ENCODE measurements at regions of chr2 and their contacts with region 1.

Region 1: DNA sequence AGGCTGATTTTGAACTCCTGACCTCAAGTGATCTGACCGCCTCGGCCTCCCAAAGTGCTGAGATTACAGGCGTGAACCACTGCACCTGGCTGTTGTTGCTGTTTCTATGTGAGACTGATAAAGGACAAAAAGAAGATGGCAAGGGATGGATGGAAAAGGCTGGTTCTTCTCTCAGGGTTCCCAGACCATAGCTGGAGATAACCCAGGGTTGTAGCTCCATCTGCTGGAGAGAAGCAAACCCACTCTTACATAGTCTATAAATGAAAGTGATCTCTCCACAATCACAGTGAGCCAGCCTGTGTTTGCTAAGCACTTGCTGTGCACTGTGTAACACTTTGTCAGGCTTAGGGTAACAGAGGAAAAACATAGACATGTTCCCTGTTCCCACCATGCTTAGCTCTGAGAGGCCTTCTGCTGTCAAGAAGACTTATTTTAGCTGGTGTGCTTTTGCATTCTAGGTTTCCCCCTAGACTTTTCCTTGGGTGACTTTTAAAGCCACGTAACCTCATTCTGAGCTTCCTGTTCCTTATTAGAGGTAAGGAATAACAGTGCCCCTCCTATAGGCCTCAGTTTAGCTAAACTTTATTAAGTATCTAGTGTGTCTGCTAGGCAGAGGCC is 49.7 kb downstream of the LIMS1 start:
- DNase-seq: peak; percentile 83
- H3K4me3 ChIP-seq: no peak overlapping the region
- H3K27ac ChIP-seq: peak overlapping the region; percentile 3
- H3K4me1 ChIP-seq: peaks cover 63% of the 10 kb centered on the region
- H3K27me3 ChIP-seq: no peaks in the 10 kb centered on the region
- CTCF ChIP-seq: peak; percentile 69 to 76
- POLR2A ChIP-seq: no peak

Region 2: DNA sequence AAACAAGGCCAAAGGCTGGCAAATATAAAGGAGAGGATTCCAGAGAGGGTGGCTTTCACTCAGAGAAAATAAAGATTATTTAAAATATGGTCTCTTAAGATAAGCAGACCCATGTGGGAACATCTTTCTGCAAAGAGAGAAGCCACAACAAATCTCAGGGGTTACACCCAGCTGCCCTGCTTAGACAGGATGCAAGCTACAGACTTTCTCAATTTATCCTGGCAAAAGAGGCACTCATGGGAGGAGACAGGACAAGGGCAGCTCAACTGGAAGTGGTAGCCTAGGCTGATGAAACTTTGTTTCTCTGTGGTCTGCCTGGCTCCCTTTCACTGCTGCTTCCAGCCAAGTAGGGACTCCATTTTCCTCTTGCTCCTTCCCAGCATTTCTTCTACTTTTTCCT is 232.1 kb before region 1 on chr2:
- CTCF ChIA-PET with region 1: interaction called, 24 read pairs
- POLR2A ChIA-PET with region 1: no interaction called
- dilution Hi-C with region 1: no loop called
- intact Hi-C with region 1: loop called (anchors 1 kb)
- DNase-seq: no peak
- H3K4me3 ChIP-seq: no peak overlapping the region
- H3K27ac ChIP-seq: no peak overlapping the region
- H3K4me1 ChIP-seq: no peaks in the 10 kb centered on the region
- H3K27me3 ChIP-seq: peaks cover 15 to 23% of the 10 kb centered on the region in 2 experiments
- CTCF ChIP-seq: no peak
- POLR2A ChIP-seq: no peak

Region 3: GRCh38 chr2:108448678-108449493 is 135.1 kb before region 1 on chr2 and contains the start of gene GCC2:
- CTCF ChIA-PET with region 1: interaction called, 7 read pairs
- POLR2A ChIA-PET with region 1: no interaction called
- dilution Hi-C with region 1: no loop called
- intact Hi-C with region 1: loop called (anchors 2 kb)
- DNase-seq: peak; percentile 95
- H3K4me3 ChIP-seq: peak within 1 kb of the TSS; percentile 83 to 93 (median 90)
- H3K27ac ChIP-seq: peak within 1 kb of the TSS; percentile 86
- H3K4me1 ChIP-seq: peaks cover 15% of the 10 kb centered on the region
- H3K27me3 ChIP-seq: no peaks in the 10 kb centered on the region
- CTCF ChIP-seq: no peak
- POLR2A ChIP-seq: peak; percentile 83
- total RNA-seq, gene GCC2: 33.7 and 38.7 TPM in 2 replicates

Region 4: GRCh38 chr2:108533832-108534583 is 50.0 kb before region 1 on chr2 and contains the start of gene LIMS1:
- CTCF ChIA-PET with region 1: interaction called, 37 read pairs
- POLR2A ChIA-PET with region 1: interaction called, 10 read pairs
- dilution Hi-C with region 1: no loop called
- intact Hi-C with region 1: loop called (anchors 2 kb)
- DNase-seq: peak; percentile 90
- H3K4me3 ChIP-seq: peak within 1 kb of the TSS; percentile 65 to 84 (median 74)
- H3K27ac ChIP-seq: peak within 1 kb of the TSS; percentile 86
- H3K4me1 ChIP-seq: peaks cover 15% of the 10 kb centered on the region
- H3K27me3 ChIP-seq: no peaks in the 10 kb centered on the region
- CTCF ChIP-seq: no peak
- POLR2A ChIP-seq: peak; percentile 83
- total RNA-seq, gene LIMS1: 153 and 166 TPM in 2 replicates

Region 5: DNA sequence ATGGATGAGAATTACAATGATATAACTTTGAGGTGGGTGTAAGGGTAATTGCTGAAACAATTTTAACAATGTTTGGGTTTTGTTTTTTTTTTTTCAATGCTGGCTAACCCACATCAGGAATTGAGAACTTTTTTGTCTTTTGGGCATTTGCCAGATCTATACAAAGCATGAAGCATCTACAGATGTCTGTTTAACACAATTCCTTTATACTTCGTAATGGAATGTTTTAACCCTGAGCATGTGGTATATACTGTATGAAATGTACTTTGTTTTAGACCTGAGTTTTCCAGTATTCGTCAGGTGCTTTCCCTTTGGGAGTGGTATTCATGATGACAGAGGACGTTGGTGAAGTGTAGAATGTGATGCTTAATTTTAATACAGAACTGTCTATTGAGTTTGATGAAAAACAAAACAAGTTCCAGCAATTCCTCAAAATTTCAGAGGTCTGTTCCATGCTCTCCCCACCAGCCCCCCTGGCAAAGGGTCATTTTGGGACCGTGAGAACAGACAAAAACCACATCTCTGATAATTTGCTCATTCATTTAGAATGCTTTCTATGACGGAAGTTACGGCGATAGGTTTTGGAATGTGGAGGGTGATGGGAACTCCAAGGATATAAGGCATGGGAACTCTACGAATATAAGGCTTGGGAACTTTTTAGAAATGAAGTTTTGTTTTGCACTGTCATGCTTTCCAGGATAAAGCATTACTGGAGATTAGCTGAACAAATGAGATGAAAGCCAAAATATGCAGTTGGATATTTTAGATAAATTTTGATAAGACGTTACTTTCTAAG is 35.6 kb before region 1 on chr2:
- CTCF ChIA-PET with region 1: interaction called, 14 read pairs
- POLR2A ChIA-PET with region 1: no interaction called
- dilution Hi-C with region 1: no loop called
- intact Hi-C with region 1: loop called (anchors 2 kb)
- DNase-seq: no peak
- H3K4me3 ChIP-seq: no peak overlapping the region
- H3K27ac ChIP-seq: no peak overlapping the region
- H3K4me1 ChIP-seq: peaks cover 6% of the 10 kb centered on the region
- H3K27me3 ChIP-seq: no peaks in the 10 kb centered on the region
- CTCF ChIP-seq: no peak
- POLR2A ChIP-seq: no peak

Region 6: DNA sequence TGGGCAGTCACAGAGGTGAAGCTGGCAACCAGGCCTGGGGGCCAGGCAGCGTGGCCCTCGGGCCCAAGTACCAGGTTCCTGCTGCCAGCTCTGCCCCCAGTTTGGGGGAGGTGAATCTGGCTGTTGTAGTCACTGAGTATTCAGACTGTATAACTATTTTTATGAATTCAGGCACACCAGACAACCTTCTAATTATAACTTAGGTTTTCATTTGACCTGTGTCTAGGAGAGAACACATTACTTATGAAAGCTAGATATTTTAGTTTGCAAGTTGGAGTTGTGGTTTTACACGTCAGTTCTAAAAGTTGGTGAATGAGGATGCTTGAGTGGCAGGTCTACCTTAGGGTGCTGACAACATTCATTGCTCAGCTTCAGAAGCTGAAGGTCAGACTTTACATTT is 21.9 kb after region 1 on chr2:
- CTCF ChIA-PET with region 1: no interaction called
- POLR2A ChIA-PET with region 1: no interaction called
- dilution Hi-C with region 1: no loop called
- intact Hi-C with region 1: no loop called
- DNase-seq: no peak
- H3K4me3 ChIP-seq: no peak overlapping the region
- H3K27ac ChIP-seq: no peak overlapping the region
- H3K4me1 ChIP-seq: no peaks in the 10 kb centered on the region
- H3K27me3 ChIP-seq: no peaks in the 10 kb centered on the region
- CTCF ChIP-seq: no peak
- POLR2A ChIP-seq: no peak

Region 7: GRCh38 chr2:108637304-108637669 is 53.3 kb after region 1 on chr2:
- CTCF ChIA-PET with region 1: interaction called, 27 read pairs
- POLR2A ChIA-PET with region 1: no interaction called
- dilution Hi-C with region 1: no loop called
- intact Hi-C with region 1: no loop called
- DNase-seq: peak; percentile 97
- H3K4me3 ChIP-seq: no peak overlapping the region
- H3K27ac ChIP-seq: peak overlapping the region; percentile 77
- H3K4me1 ChIP-seq: peaks cover 68% of the 10 kb centered on the region
- H3K27me3 ChIP-seq: no peaks in the 10 kb centered on the region
- CTCF ChIP-seq: no peak
- POLR2A ChIP-seq: peak; percentile 55